Cardiac septum (tissue), 1 donor: ENCODE measurements at regions of chr4 and their contacts with region 1.

Region 1: DNA sequence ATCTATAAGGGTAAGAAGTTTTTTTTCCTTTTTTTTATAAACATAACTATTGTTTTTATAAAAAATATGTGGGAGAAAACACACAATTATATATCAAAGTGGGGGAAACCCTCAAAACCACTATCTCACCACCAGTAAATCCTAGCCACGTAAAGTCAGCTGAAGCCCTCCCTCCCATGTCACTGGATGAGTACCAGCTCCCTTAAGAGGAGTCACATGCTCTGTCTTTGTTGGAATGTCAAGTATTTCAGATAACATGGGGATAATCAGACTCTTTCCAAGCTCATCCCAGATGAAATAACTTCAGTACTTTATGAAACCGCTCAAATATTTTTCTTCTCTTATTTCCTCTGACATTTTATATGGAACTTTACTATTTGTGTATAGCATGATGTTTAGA is 2.4 kb downstream of the MYOZ2 start:
- DNase-seq: no peak

Region 2: GRCh38 chr4:118981839-118982381 is 156.1 kb before region 1 on chr4:
- intact Hi-C with region 1: loop called (anchors 5 kb)
- DNase-seq: no peak

Region 3: DNA sequence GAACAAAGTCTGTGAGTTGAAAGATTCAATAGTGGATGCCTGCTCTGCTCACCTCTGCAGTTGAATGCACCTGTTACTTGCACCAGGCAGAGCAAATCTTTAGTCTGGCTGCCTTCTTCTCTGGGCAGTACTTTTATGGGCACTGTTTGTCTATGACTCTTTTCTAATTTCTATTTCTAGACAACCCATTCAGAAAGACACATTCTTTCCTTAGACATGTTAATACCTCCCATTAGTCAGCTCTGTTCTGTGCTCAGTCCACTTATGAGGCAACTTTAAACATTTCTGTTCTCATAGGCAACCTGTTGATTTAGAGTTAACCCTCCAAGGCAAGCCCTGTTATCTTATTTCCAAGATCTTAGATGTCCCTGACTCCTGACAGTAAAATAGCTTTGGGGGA is 140.4 kb before region 1 on chr4:
- intact Hi-C with region 1: loop called (anchors 5 kb)
- DNase-seq: no peak

Region 4: GRCh38 chr4:119510395-119511149 is 372.5 kb after region 1 on chr4:
- intact Hi-C with region 1: no loop called
- DNase-seq: no peak